Activated CD4-positive, alpha-beta T cell treated with anti-CD3 and anti-CD28 coated beads, Interleukin-2, amount 10 ng/mL, durations not matched to agents 7 days and 5 days (primary cell): ENCODE measurements at regions of chr3 and their contacts with region 1.

Region 1: GRCh38 chr3:132641837-132642538 is 17.6 kb downstream of the ACAD11 start:
- DNase-seq: no peak
- H3K4me3 Mint-ChIP-seq: no peak overlapping the region
- H3K27ac Mint-ChIP-seq: no peak overlapping the region
- H3K4me1 Mint-ChIP-seq: peaks cover 2% of the 10 kb centered on the region
- H3K27me3 Mint-ChIP-seq: no peaks in the 10 kb centered on the region

Region 2: DNA sequence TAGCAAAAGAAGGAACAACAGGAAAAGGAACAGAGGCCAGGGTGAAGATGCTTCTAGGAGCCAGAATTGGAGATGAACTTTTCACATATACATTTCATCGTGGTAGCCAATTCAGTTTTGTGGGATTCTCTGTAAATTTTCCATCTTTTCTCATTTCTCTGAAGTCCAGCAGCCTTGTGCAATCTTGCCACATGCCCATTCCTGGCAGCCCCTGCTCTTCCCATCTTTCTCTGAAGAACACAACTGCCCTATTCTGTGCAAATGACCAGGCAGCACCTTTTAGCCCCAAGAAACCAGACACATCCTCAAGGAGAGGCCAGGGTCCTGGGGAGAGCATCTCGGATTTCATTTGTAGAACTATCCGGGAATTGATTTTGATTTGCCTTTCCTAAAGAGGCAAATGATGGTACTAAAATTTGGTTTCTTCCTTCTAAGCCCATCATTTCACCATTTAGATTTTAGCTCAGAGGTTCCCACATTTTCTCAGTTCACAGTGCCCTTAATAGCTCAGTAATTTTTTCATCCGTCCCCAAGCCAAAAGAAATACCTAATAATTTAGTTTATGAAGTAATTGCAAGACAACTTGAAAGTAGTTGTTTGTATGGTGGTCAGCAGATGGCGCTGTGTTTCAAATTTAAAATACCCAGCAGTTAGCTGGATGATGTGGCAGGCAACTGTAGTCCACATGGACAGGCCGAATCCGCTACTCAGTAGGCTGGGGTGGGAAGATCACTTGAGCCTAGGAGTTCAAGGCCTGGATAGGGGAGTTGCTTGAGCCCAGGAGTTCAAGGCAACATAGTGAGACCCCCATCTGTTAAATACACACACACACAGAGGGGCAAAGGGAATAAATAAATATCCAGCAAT is 106.2 kb before region 1 on chr3:
- CTCF ChIA-PET with region 1: interaction called, 16 read pairs
- POLR2A ChIA-PET with region 1: no interaction called
- DNase-seq: peak; percentile 65
- H3K4me3 Mint-ChIP-seq: no peak overlapping the region
- H3K27ac Mint-ChIP-seq: no peak overlapping the region
- H3K4me1 Mint-ChIP-seq: no peaks in the 10 kb centered on the region
- H3K27me3 Mint-ChIP-seq: no peaks in the 10 kb centered on the region